ENCODE measurements at regions of chr3 and their contacts with region 1.

Region 1: DNA sequence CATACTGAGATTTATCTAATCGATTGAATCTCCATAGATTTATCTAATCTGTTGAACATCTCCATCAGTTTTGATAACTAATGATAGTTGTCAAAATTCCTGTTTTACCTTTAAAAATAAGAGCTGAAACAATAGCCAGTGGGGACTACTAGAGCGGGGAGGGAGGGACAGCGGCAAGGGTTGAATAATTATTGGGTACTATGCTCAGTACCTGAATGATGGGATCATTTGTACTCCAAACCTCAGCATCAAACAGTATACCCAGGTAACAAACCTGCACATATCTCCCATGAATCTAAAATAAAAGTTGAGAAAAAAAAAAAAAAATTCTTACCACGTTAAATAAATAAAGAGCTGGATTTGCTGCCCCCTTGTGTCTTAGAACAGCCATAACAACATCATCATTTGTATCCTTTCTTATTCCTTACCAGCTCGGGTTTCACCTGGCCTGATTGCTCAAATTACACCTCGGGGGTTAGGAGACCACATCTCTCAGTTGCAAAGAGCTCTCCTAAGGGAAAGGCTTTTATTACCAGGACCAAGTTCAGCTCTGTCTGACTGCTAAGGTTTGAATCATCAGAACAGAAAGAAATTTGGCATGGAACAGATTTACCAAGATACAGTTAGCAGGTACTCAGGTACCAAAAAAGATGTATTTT is 25.7 kb upstream of the RPL39L start:
- DNase-seq: peak; percentile 8
- H3K4me3 Mint-ChIP-seq: no peak overlapping the region
- H3K27ac Mint-ChIP-seq: no peak overlapping the region
- H3K4me1 Mint-ChIP-seq: no peaks in the 10 kb centered on the region
- H3K27me3 Mint-ChIP-seq: peaks cover 25% of the 10 kb centered on the region

Region 2: GRCh38 chr3:186826976-186827731 is 337.9 kb before region 1 on chr3:
- intact Hi-C with region 1: loop called (anchors 2 kb)
- DNase-seq: peak; percentile 87
- H3K4me3 Mint-ChIP-seq: peak overlapping the region; percentile 93
- H3K27ac Mint-ChIP-seq: peak overlapping the region; percentile 78
- H3K4me1 Mint-ChIP-seq: peaks cover 20% of the 10 kb centered on the region
- H3K27me3 Mint-ChIP-seq: peaks cover 48% of the 10 kb centered on the region

Region 3: DNA sequence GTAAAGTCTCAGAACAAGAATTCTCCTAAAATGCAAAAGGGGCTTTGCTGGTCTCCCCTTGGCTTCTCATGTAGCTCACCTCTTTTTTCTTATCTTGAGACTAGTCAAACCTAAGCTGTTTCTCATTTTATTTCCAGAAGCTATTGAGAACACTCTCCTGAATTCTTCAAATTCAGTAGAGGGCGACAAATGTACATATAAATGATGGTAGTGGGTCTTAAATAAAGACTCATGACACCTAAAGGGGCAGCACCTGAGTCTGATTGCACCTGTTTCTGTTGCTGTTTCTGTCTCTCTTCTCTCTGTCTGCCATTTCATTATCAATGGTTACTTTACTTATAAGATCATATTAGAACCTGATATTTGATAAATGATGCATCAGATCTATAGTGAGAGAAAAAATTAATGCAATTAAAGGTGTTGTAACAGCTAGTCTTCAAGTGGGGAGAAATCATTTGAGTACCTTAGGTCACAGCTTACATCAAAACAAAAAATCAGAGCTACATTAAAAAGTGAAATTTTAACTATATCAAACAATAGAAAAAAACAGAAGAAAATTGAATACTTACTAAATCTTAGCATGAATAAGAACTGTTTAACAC is 315.5 kb before region 1 on chr3:
- intact Hi-C with region 1: loop called (anchors 1 kb)
- DNase-seq: no peak
- H3K4me3 Mint-ChIP-seq: no peak overlapping the region
- H3K27ac Mint-ChIP-seq: no peak overlapping the region
- H3K4me1 Mint-ChIP-seq: peaks cover 26% of the 10 kb centered on the region
- H3K27me3 Mint-ChIP-seq: peaks cover 13% of the 10 kb centered on the region

Region 4: GRCh38 chr3:187082758-187083375 is 82.1 kb before region 1 on chr3:
- intact Hi-C with region 1: no loop called
- DNase-seq: no peak
- H3K4me3 Mint-ChIP-seq: no peak overlapping the region
- H3K27ac Mint-ChIP-seq: no peak overlapping the region
- H3K4me1 Mint-ChIP-seq: peaks cover 13% of the 10 kb centered on the region
- H3K27me3 Mint-ChIP-seq: no peaks in the 10 kb centered on the region

Region 5: GRCh38 chr3:187112934-187113793 is 51.9 kb before region 1 on chr3:
- intact Hi-C with region 1: loop called (anchors 1 kb)
- DNase-seq: no peak
- H3K4me3 Mint-ChIP-seq: no peak overlapping the region
- H3K27ac Mint-ChIP-seq: no peak overlapping the region
- H3K4me1 Mint-ChIP-seq: peaks cover 9% of the 10 kb centered on the region
- H3K27me3 Mint-ChIP-seq: no peaks in the 10 kb centered on the region

Region 6: GRCh38 chr3:187130346-187131066 is 34.5 kb before region 1 on chr3:
- intact Hi-C with region 1: loop called (anchors 1 kb)
- DNase-seq: peak; percentile 47
- H3K4me3 Mint-ChIP-seq: peak overlapping the region; percentile 51
- H3K27ac Mint-ChIP-seq: peak overlapping the region; percentile 91
- H3K4me1 Mint-ChIP-seq: peaks cover 58% of the 10 kb centered on the region
- H3K27me3 Mint-ChIP-seq: no peaks in the 10 kb centered on the region

Region 7: DNA sequence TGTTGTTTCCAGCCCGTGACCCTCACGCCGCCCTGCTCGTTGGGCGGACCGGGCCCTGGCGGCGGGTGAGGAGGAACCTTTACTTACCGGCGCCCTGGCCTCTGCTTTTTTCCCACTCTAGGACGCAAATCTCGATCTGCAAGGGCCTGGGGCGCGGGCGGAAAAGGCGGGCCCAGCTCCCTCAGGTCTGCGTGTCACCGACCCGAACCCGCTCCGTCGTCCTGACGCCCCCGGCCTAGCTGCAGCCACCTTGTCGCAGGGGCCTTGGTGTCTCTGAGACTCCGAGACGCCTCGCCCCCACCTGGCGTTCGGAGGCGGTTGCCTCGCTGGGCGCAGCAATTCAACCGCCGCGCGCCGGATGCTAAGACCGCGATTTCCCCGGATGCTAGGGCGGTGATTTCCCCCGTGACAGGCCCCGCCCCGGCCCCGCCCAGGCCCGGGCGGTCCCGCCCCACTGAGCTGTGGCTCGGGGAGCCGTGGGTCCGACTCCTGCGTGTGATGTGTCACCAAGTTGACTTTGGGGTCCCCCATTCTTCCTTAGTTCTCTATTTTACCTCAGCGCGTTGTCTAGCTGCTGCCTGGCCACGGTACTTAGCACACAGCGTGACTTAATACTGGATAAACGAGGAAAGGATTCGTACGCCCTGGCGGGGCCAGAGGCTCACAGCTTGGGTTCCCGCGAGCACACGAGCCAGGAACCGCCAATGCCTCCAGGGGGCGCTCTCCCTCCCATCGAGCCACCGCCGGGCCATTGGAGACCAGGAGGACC is 25.7 kb before region 1 on chr3 and contains the start of gene RPL39L:
- intact Hi-C with region 1: loop called (anchors 1 kb)
- DNase-seq: peak; percentile 91
- H3K4me3 Mint-ChIP-seq: peak within 1 kb of the TSS; percentile 92
- H3K27ac Mint-ChIP-seq: peak within 1 kb of the TSS; percentile 96
- H3K4me1 Mint-ChIP-seq: peaks cover 34% of the 10 kb centered on the region
- H3K27me3 Mint-ChIP-seq: peaks cover 3% of the 10 kb centered on the region
- total RNA-seq, gene RPL39L: 7.5 and 8.3 TPM in 2 replicates

Region 8: DNA sequence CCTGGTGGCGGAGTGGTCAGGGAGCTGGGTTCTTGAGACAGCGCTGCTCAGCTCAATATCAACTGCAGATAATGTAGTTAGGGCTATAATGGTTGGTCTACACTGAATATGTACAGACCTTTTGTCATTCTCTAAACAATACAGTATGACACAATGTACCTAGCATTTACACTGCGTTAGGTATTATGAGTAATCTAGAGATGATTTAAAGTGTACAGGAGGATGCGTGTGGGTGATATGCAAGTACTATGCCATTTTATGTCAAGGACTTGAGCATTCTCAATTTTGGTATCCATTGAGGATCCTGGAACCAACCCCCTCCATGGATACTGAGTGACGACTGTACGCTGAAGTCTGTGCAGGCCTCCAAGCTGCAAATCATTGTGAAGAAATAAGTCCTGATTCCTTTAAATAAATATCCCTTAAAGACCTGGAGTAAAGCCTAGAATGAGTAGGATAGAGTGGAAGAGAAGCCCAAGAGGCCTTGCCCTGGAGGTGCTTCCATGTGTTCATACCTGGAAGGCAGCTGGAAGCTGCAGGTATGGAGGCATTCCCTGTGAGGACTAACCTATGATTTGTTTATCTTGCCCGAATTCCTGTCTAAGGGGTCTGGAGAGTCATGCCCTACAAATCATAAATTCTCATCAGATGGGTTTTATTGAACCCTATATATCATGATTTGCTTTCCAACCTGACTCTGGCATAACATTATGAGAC is 16.6 kb after region 1 on chr3:
- intact Hi-C with region 1: no loop called
- DNase-seq: no peak
- H3K4me3 Mint-ChIP-seq: no peak overlapping the region
- H3K27ac Mint-ChIP-seq: no peak overlapping the region
- H3K4me1 Mint-ChIP-seq: peaks cover 7% of the 10 kb centered on the region
- H3K27me3 Mint-ChIP-seq: peaks cover 3% of the 10 kb centered on the region

Measured in activated T-helper 1 cell treated with anti-CD3 and anti-CD28 coated beads, Interleukin-12 subunit alpha, Interleukin-12 subunit beta, Interleukin-2, Interleukin-4 antibody, amounts not matched to agents 30 ng/mL and 10 ng/mL and 1 ng/mL, durations not matched to agents 14 hours and 24 hours and 36 hours (primary cell).